ENCODE measurements at regions of chr9 and their contacts with region 1.

Region 1: DNA sequence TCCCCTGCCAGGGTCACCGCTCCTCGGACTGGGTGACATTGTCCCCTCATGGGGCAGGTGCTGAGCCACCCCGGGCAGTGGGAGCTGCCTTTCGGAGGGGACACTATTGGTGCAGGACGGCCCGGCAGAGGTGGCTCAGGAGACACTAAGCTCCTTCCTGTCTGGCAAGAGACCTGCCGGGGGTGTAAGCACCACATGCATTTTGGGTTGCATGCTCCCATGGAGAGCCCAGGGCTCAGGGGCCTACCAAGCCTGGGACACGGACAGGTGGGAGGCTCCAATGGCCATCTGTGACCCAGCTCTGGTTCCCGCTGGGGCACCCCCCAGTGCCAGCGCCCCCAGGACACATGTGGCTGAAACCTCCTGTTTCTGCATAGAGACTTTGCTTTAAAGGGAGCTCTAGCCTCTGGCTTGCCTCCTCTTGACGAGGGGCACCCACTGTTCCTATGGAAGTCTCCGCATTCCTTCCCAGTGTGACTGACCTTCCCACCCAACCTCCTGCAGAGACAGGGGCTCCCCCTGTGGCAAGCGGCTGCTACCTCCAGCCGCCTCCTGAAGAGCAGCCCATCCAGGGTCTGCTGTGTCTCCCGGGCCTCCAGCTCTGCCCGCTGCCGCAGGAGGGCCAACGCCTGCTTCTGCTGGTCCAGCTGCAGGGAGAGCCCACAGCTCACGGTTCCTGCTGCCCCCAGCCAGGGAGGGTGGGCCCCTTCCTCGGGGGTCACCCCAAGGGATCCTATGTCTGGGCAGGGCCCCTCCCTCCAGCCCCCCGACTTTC is 28.1 kb downstream of the CCDC187 start:
- DNase-seq: no peak
- ATAC-seq: no peak
- H3K4me3 ChIP-seq: no peak overlapping the region
- H3K27ac ChIP-seq: no peak overlapping the region
- H3K4me1 ChIP-seq: no peaks in the 10 kb centered on the region
- H3K27me3 ChIP-seq: no peaks in the 10 kb centered on the region
- CTCF ChIP-seq: no peak
- POLR2A ChIP-seq: no peak

Region 2: DNA sequence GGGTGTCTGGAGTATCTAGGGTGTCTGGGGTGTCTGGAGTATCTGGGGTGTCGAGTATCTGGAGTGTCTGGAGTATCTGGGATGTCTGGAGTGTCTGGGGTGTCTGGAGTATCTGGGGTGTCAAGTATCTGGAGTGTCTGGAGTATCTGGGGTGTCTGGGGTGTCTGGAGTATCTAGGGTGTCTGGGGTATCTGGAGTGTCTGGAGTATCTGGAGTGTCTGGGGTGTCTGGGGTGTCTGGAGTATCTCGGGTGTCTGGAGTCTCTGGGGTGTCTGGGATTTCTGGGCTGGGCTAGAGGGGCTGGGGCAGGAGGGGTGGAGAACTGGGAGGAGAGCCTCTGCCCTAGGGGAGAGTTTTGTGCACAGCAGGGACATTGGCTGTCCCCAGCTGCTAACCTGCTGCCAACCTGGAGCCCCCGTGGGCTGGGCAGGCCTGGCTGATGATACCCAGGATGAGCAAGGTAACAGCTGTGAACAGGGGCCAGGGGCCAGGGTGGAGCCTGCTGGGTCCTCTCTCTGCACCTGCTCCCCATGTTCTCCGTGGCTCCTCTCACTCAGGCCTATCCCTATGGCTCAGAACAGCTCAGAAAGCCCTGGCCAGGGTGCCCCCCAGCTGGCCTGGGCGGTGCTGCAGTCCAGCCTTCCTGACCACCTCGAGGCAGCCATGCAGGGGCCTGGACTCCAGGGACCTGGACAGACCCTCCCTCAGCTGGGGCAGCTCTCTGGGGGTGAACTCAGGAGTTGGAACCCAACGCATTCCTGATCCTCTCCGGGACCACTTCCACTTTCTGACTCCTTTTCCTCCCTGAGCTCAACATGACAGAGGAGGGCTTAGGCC is 100.8 kb before region 1 on chr9:
- intact Hi-C with region 1: loop called (anchors 5 kb)
- DNase-seq: no peak
- ATAC-seq: no peak
- H3K4me3 ChIP-seq: no peak overlapping the region
- H3K27ac ChIP-seq: no peak overlapping the region
- H3K4me1 ChIP-seq: peaks cover 4% of the 10 kb centered on the region
- H3K27me3 ChIP-seq: no peaks in the 10 kb centered on the region
- CTCF ChIP-seq: no peak
- POLR2A ChIP-seq: no peak